ENCODE measurements at regions of chr1 and their contacts with region 1.

Region 1: GRCh38 chr1:51897699-51898031 is 19.1 kb upstream of the NRDC start:
- DNase-seq: no peak
- ATAC-seq: no peak
- H3K4me3 ChIP-seq: no peak overlapping the region
- H3K27ac ChIP-seq: no peak overlapping the region
- H3K4me1 ChIP-seq: no peaks in the 10 kb centered on the region
- H3K27me3 ChIP-seq: peaks cover 0 to 5% of the 10 kb centered on the region in 2 experiments; a peak in 1 of 4 replicates
- CTCF ChIP-seq: no peak
- EP300 ChIP-seq: no peak
- POLR2A ChIP-seq: no peak
- RAD21 ChIP-seq: no peak

Region 2: DNA sequence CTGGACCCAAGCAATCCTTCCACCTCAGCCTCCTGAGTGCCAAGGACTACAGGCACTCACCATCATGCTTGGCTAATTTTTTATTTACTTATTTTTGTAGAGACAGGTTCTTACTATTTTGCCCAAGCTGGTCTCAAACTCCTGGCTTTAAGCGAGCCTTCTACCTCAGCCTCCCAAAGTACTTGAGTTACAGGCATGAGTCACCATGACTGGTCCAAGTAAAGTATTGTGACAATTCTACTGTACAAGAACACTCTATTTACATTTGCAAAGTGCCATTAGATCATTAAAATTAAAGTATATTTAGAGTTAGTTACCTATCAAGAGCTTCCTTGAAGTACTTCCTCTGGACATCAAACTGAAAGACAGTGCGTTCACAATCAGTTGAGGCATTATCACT is 64.0 kb before region 1 on chr1:
- CTCF ChIA-PET with region 1: no interaction called
- POLR2A ChIA-PET with region 1: no interaction called
- RAD21 ChIA-PET with region 1: no interaction called
- SMC1A ChIA-PET with region 1: no interaction called
- in situ Hi-C with region 1: no loop called
- intact Hi-C with region 1: no loop called
- DNase-seq: no peak
- ATAC-seq: no peak
- H3K4me3 ChIP-seq: no peak overlapping the region
- H3K27ac ChIP-seq: no peak overlapping the region
- H3K4me1 ChIP-seq: no peaks in the 10 kb centered on the region
- H3K27me3 ChIP-seq: no peaks in the 10 kb centered on the region
- CTCF ChIP-seq: no peak
- EP300 ChIP-seq: no peak
- POLR2A ChIP-seq: no peak
- RAD21 ChIP-seq: no peak

Region 3: DNA sequence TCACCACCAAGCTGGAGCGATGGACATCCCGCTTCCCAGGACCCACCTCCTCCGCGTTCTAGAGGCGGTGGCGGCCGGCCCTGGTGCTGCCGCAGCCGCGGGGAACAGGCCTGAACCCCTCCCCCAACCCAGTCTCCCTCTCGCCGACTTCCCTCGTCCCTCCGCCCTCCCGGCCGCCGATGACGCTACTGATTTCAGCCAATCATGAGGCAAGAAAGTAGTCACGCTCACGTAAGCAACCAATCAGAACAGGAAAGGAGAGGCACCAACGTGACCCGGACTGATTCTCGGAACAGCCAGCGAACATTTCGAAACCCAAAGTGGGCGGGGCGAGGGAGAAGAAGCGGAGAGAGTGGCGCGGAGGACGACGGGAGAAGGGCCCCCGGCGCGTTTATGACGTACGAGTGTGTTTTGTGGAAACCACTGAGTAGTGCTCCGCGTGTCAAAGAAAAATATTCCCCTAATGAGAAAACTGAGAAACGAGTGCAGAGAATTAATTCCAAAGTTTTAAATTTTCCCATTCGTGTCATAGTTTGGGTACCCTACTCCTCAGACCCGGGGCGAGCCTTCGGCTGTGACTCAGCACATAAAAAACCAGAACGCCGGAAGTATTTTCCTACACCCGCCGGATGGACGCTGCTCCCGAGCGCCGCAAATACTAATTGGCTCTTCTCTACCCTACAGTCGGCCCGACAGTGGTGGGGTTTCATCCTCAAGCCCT is 18.9 kb before region 1 on chr1 and contains the start of gene NRDC:
- CTCF ChIA-PET with region 1: interaction called, 10 read pairs
- POLR2A ChIA-PET with region 1: no interaction called
- RAD21 ChIA-PET with region 1: interaction called, 9 read pairs
- SMC1A ChIA-PET with region 1: interaction called, 8 read pairs
- in situ Hi-C with region 1: no loop called
- intact Hi-C with region 1: no loop called
- DNase-seq: peak; percentile 100
- ATAC-seq: peak; percentile 94
- H3K4me3 ChIP-seq: peak within 1 kb of the TSS; percentile 90
- H3K27ac ChIP-seq: peak within 1 kb of the TSS; percentile 99
- H3K4me1 ChIP-seq: peaks cover 5% of the 10 kb centered on the region
- H3K27me3 ChIP-seq: no peaks in the 10 kb centered on the region
- CTCF ChIP-seq: no peak
- EP300 ChIP-seq: peak in 1 of 2 experiments; percentile 68; a peak in 2 of 4 replicates
- POLR2A ChIP-seq: peak; percentile 95
- RAD21 ChIP-seq: no peak
- polyA plus RNA-seq, gene NRDC: 50.1 to 59.3 TPM

Region 4: DNA sequence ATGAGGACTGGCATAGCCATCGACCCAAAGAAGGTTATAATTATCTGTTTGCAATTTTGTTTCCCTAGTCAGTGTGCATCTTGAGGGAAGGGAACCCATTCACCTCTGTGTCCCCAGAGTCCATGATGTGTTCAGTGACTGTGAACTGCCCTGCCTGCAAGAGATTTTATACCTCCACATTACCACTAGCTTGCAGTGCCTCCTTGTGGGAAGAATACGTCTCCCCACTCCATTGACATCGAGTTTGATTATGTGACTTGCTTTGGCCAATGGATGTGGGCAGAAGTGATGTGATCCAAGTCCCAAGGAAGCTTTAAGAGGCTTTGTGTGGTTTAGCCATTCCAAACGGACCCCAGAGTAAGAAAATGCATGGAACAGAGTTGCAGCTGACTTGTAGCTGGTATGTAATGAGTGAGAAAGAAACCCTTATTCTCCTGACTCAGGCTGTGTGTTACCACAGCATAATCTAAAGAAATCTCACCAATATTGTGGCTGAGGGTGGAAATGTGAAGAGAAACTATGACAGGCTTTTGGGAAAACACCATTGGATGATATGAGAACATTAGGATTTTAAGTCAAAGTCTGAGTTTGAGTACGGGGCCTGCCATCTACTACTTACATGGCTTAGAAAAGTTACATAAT is 28.6 kb after region 1 on chr1:
- CTCF ChIA-PET with region 1: interaction called, 36 read pairs
- POLR2A ChIA-PET with region 1: no interaction called
- RAD21 ChIA-PET with region 1: interaction called, 19 read pairs
- SMC1A ChIA-PET with region 1: interaction called, 11 read pairs
- in situ Hi-C with region 1: no loop called
- intact Hi-C with region 1: no loop called
- DNase-seq: no peak
- ATAC-seq: peak; percentile 72
- H3K4me3 ChIP-seq: no peak overlapping the region
- H3K27ac ChIP-seq: no peak overlapping the region
- H3K4me1 ChIP-seq: no peaks in the 10 kb centered on the region
- H3K27me3 ChIP-seq: no peaks in the 10 kb centered on the region
- CTCF ChIP-seq: peak in 2 of 3 experiments; percentile 24 to 45; a peak in 3 of 6 replicates
- EP300 ChIP-seq: no peak
- POLR2A ChIP-seq: no peak
- RAD21 ChIP-seq: peak; percentile 50

Region 5: GRCh38 chr1:51946300-51946699 is 48.6 kb after region 1 on chr1:
- CTCF ChIA-PET with region 1: interaction called, 11 read pairs
- POLR2A ChIA-PET with region 1: no interaction called
- RAD21 ChIA-PET with region 1: interaction called, 4 read pairs
- SMC1A ChIA-PET with region 1: interaction called, 9 read pairs
- in situ Hi-C with region 1: no loop called
- intact Hi-C with region 1: no loop called
- DNase-seq: no peak
- ATAC-seq: no peak
- H3K4me3 ChIP-seq: no peak overlapping the region
- H3K27ac ChIP-seq: no peak overlapping the region
- H3K4me1 ChIP-seq: no peaks in the 10 kb centered on the region
- H3K27me3 ChIP-seq: no peaks in the 10 kb centered on the region
- CTCF ChIP-seq: no peak
- EP300 ChIP-seq: no peak
- POLR2A ChIP-seq: no peak
- RAD21 ChIP-seq: no peak

Region 6: DNA sequence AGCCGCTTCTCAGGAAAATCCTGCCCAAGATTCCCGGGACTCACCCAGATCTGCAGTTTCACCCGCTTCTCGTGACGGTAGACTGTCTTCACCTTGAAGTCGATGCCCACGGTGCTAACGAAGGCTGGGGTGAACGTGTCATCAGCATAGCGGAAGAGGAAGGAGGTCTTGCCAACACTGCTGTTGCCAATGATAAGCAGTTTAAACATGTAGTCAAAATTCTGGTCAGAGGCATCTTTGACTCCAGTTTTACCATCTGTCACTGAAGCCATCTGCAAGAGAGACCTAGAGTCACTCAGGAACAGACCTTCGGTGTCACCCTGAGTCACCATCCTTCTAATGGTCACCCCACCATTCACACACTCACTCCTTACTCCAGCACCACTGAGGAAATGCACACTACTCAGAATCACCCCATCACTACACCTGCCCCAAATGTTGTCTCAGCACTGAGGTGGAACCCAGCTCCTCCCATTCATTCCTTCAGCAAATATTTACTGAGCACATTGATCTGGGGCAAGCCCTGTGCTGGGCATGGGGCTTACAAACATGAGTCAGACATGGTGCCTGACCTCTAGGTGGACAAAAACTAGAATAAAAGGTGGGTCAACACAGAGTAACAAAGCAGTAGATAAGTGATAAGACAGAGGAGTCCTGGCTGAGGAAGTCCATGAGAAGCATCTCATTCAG is 79.3 kb after region 1 on chr1:
- CTCF ChIA-PET with region 1: interaction called, 4 read pairs
- POLR2A ChIA-PET with region 1: no interaction called
- RAD21 ChIA-PET with region 1: interaction called, 7 read pairs
- SMC1A ChIA-PET with region 1: interaction called, 20 read pairs
- in situ Hi-C with region 1: no loop called
- intact Hi-C with region 1: no loop called
- DNase-seq: no peak
- ATAC-seq: no peak
- H3K4me3 ChIP-seq: no peak overlapping the region
- H3K27ac ChIP-seq: no peak overlapping the region
- H3K4me1 ChIP-seq: peaks cover 23% of the 10 kb centered on the region
- H3K27me3 ChIP-seq: no peaks in the 10 kb centered on the region
- CTCF ChIP-seq: no peak
- EP300 ChIP-seq: no peak
- POLR2A ChIP-seq: no peak
- RAD21 ChIP-seq: no peak

Region 7: GRCh38 chr1:52002038-52002917 is 104.6 kb after region 1 on chr1:
- CTCF ChIA-PET with region 1: interaction called, 177 read pairs
- POLR2A ChIA-PET with region 1: interaction called, 6 read pairs
- RAD21 ChIA-PET with region 1: interaction called, 96 read pairs
- SMC1A ChIA-PET with region 1: interaction called, 99 read pairs
- in situ Hi-C with region 1: loop called (anchors 5 kb)
- intact Hi-C with region 1: loop called (anchors 1 kb)
- DNase-seq: peak; percentile 65
- ATAC-seq: peak; percentile 100
- H3K4me3 ChIP-seq: no peak overlapping the region
- H3K27ac ChIP-seq: no peak overlapping the region
- H3K4me1 ChIP-seq: no peaks in the 10 kb centered on the region
- H3K27me3 ChIP-seq: no peaks in the 10 kb centered on the region
- CTCF ChIP-seq: peak; percentile 85 to 95 (median 92)
- EP300 ChIP-seq: no peak
- POLR2A ChIP-seq: no peak
- RAD21 ChIP-seq: peak; percentile 97